ENCODE measurements at regions of chr1 and their contacts with region 1.

Region 1: DNA sequence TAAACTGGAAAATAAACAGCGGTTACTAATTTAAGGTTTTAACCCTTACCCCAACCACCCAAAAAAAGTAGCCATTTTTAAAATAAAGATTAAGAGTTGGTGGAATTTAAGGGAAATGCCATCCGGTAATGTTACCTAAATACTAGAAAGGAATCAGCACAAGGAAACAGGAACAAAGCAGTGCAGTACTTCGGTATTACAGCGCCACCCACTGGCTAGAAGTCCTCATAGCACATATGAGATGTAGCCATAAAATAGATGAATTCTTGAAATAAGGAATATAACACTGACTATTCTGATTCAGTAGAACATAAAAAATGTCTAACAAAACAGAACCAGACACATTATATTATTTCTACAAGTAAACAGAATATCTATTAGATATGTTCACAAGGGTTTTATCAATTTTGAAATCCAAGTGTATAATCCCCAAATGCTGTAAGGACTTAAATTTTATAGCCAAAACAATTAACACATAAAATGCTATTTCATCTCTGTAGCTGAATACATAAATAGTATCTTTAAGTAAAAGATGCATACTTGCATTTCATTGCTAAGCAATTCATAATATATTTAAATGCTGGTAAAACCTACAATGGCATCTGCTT is 58.8 kb downstream of the FRRS1 start:
- DNase-seq: peak; percentile 35
- ATAC-seq: peak; percentile 71
- H3K4me3 ChIP-seq: no peak overlapping the region
- H3K27ac ChIP-seq: no peak overlapping the region
- H3K4me1 ChIP-seq: no peaks in the 10 kb centered on the region
- H3K27me3 ChIP-seq: no peaks in the 10 kb centered on the region
- CTCF ChIP-seq: peak; percentile 45 to 97 (median 86); a peak in 5 of 6 replicates
- POLR2A ChIP-seq: no peak
- RAD21 ChIP-seq: peak; percentile 78

Region 2: GRCh38 chr1:98749152-98749756 is 958.4 kb before region 1 on chr1:
- CTCF ChIA-PET with region 1: no interaction called
- POLR2A ChIA-PET with region 1: no interaction called
- RAD21 ChIA-PET with region 1: no interaction called
- intact Hi-C with region 1: loop called (anchors 5 kb)
- DNase-seq: no peak
- ATAC-seq: peak; percentile 42; the same call in 1 of the 2 replicates
- H3K4me3 ChIP-seq: no peak overlapping the region
- H3K27ac ChIP-seq: no peak overlapping the region
- H3K4me1 ChIP-seq: no peaks in the 10 kb centered on the region
- H3K27me3 ChIP-seq: no peaks in the 10 kb centered on the region
- CTCF ChIP-seq: peak; percentile 22 to 52 (median 33); a peak in 5 of 6 replicates
- POLR2A ChIP-seq: no peak
- RAD21 ChIP-seq: peak; percentile 28

Region 3: GRCh38 chr1:98794196-98794886 is 913.3 kb before region 1 on chr1:
- CTCF ChIA-PET with region 1: interaction called, 3 read pairs
- POLR2A ChIA-PET with region 1: no interaction called
- RAD21 ChIA-PET with region 1: no interaction called
- intact Hi-C with region 1: loop called (anchors 5 kb)
- DNase-seq: peak; percentile 48
- ATAC-seq: peak; percentile 92
- H3K4me3 ChIP-seq: no peak overlapping the region
- H3K27ac ChIP-seq: no peak overlapping the region
- H3K4me1 ChIP-seq: no peaks in the 10 kb centered on the region
- H3K27me3 ChIP-seq: no peaks in the 10 kb centered on the region
- CTCF ChIP-seq: peak; percentile 46 to 80 (median 69); a peak in 5 of 6 replicates
- POLR2A ChIP-seq: no peak
- RAD21 ChIP-seq: peak; percentile 67

Region 4: DNA sequence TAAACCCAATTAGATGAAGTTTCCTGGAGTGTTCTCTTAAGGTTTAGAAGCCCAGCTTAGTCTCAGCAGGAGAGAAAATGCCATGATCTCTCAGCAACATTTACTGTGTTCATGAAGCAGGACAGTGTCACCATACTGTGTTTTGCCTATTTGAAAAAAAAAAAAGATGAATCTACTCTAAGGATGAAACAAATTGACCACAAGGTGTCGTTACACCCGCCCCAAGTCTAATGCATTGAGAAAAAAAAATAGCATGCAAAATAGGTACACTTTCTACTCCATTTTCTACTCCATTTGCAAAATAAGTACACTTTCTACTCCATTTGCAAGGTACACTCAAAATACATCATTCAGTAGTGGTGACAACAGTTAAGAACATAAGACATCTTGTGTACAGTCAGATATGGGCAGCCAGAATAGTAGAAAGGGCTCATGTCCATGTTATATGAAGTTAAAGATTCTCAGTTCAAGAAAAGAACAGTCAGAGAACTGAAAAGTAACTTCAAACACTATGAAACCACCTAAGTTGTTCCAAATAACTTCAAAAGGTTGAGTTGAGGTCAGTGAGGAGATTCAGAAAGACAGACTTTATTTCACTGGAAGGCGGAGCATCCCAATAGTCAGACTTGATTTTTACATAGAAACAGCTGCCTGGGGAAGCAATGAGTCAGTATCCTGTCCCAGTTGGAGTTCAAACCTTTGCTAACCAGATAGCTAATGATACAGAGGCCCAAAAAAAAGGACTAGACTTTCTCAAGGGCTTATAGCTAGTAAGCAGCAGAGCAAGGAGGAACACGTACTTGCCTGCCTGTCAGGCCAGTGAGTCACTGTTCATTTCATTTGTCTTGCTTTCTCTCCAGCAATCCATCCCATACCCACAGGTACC is 716.3 kb before region 1 on chr1:
- CTCF ChIA-PET with region 1: no interaction called
- POLR2A ChIA-PET with region 1: no interaction called
- RAD21 ChIA-PET with region 1: no interaction called
- intact Hi-C with region 1: loop called (anchors 10 kb)
- DNase-seq: peak; percentile 40
- ATAC-seq: peak; percentile 84
- H3K4me3 ChIP-seq: no peak overlapping the region
- H3K27ac ChIP-seq: no peak overlapping the region
- H3K4me1 ChIP-seq: 0 out of 4 replicates have a peak, but pooled peaks cover 0 to 5% of the 10 kb centered on the region in 2 experiments
- H3K27me3 ChIP-seq: no peaks in the 10 kb centered on the region
- CTCF ChIP-seq: peak; percentile 28 to 78 (median 59); a peak in 5 of 6 replicates
- POLR2A ChIP-seq: no peak
- RAD21 ChIP-seq: peak; percentile 49

Region 5: DNA sequence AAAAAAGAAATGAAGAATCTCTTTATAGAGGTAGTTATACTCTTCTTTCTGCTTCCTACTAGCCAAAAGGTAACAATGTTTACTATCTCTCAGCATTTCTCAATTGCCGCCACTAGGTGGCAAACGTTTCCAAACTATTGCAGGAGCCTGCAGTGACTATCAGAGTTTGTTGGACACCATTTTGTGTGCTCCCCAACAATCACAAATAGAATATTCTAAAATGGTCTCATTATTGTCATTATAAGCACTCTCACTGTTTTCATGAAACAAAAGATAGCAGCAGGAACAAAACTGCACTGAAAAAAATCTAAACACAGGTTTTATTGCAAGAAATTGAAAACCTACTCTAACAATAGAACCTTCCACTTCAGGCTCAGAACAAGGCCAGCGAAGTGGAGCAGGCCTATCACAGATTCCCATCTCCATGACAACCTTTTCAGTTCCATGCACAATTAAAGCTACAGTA is 527.3 kb before region 1 on chr1:
- CTCF ChIA-PET with region 1: interaction called, 4 read pairs
- POLR2A ChIA-PET with region 1: no interaction called
- RAD21 ChIA-PET with region 1: no interaction called
- intact Hi-C with region 1: loop called (anchors 1 kb)
- DNase-seq: peak; percentile 79
- ATAC-seq: peak; percentile 97
- H3K4me3 ChIP-seq: no peak overlapping the region
- H3K27ac ChIP-seq: peak overlapping the region; percentile 38; the same call in 1 of the 2 replicates
- H3K4me1 ChIP-seq: peaks cover 2 to 3% of the 10 kb centered on the region in 2 experiments; a peak in 3 of 4 replicates
- H3K27me3 ChIP-seq: no peaks in the 10 kb centered on the region
- CTCF ChIP-seq: peak; percentile 71 to 83 (median 82)
- POLR2A ChIP-seq: no peak
- RAD21 ChIP-seq: peak; percentile 90